ENCODE measurements at regions of chr4 and their contacts with region 1.

Region 1: DNA sequence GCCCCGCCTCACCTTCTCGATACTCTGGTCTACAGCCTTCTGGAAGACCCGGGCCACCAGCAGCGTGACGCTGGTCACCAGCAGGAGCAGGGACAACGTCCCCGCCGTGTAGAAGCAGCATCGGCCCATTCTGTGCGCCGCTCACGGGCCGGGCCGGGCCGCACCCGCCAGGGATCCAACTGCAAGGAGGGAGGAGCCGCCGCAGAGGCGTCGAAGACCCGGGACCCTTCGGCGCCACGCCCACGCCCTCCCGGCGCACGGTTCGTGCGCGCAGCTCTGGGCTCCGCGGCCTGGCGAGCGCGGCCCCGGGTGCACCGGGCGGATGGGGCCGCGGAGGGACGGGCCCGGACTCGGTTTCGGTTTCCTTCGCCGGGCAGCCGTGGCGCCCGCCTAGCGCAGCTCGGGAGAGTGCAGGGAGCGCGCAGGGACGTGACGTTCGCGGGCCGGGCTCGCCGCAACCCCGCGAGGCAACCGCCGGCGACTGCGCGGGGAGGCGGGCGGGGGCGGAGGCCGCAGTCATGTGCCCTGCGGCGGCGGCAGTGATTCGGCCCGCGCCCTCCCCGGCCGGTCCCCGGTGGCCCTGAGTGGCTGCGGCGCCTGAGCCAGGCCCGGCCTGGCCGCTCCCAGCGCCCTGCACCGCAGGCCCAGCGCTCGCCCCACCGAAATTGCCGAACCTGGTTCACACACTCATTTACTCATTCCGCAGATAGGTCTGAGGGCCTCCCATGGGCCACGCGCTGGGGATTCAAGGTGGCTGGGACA is at the start of gene SCARB2:
- DNase-seq: peak; percentile 71 to 95 (median 84)
- H3K4me3 ChIP-seq: peak within 1 kb of the TSS; percentile 59 to 98 (median 89)
- H3K27ac ChIP-seq: peak within 1 kb of the TSS; percentile 95 to 100 (median 99)
- H3K27me3 ChIP-seq: no peaks in the 10 kb centered on the region
- CTCF ChIP-seq: peak in 21 of 56 donors; percentile 4 to 59 (median 24)
- total RNA-seq, gene SCARB2: 107 to 347 (median 169) TPM

Region 2: DNA sequence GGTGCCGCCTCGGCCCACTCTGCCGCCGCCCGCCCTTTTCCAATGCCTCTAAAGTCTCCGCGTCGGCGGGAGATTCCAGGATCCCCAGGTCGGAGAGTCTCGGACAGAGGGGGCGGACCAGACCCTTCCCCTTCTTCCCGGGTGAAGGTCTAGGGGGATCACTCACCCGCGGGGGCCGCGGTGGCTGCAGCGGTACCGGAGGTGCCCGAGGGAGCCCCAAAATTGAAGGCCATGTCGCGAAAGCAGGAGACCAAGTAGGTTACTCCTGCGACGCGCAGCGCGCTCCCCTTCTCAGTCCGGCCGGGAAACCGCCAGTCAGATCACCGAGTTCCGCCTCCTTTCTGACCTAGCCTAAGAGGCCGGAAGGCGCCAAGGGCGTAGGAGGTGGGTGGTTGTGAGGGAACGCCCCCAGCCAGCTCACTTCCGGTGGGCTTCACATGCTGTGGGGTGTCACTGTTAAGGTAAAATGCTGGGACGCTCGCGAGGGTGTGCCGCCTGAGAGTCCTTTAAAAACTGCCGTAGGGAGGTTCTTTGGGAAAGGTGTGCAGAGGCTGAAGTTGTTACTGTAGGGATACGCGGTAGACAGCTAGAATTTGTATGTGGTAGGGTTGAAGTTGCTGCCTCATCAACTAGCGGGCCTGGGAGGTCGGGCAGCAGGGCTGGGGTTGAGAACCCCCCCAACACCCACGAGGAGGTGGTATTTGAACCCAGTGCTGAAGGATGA is 65.3 kb before region 1 on chr4 and contains the start of gene NUP54:
- intact Hi-C with region 1: loop called in 1 of 2 experiments (anchors 2 kb)
- DNase-seq: peak; percentile 89 to 96 (median 94)
- H3K4me3 ChIP-seq: peak within 1 kb of the TSS; percentile 71 to 100 (median 93)
- H3K27ac ChIP-seq: peak within 1 kb of the TSS; percentile 9 to 96 (median 85)
- H3K27me3 ChIP-seq: no peaks in the 10 kb centered on the region
- CTCF ChIP-seq: peak in 31 of 56 donors; percentile 9 to 55 (median 30)
- total RNA-seq, gene NUP54: 26.9 to 65.4 (median 45.4) TPM

Region 3: GRCh38 chr4:76179398-76180318 is 33.9 kb before region 1 on chr4:
- intact Hi-C with region 1: loop called in 1 of 2 experiments (anchors 2 kb)
- DNase-seq: peak; percentile 68 to 95 (median 88)
- H3K4me3 ChIP-seq: peak overlapping the region in 6 of 59 donors; percentile 2 to 26 (median 6)
- H3K27ac ChIP-seq: peak overlapping the region in 58 of 59 donors; percentile 40 to 96 (median 83)
- H3K27me3 ChIP-seq: no peaks in the 10 kb centered on the region
- CTCF ChIP-seq: peak; percentile 73 to 99 (median 95)

Region 4: DNA sequence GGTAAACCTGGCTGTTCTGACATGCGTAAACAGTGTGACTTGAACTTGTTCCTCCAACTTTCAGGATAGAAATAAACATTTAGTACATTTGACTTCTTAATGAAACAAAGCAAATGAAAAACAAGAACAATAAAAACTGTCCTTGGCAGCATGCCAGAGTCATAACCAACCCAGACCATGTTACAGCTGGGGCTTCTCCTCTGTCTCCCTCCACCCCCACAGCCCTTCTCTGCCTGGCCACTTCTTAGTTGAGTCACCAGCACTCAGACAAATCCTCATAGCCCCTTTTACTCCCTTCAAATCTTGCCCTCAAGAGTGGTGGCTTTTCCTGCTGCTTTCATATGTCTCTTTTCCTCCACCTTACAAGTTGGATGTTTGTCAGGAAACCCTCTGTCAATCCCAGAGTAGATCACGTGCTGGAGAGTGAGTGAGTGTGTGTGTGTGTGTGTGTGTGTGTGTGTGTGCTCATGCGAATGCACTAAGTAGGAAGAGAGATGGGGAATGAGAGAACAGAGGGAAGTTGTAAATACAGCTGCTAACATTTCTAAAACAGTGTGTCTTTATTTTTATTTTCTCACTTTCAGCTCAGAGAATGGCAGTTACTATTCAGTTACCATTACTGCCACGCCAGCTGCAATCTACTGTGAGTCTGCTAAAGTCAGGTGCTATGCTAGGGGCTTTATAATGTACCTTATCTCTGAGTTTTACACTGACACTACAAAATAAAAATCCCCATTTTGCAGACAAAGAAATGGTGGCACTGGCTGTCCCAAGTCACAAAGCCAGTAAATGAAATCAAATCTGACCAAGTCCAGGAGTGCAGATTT is 15.0 kb before region 1 on chr4:
- intact Hi-C with region 1: loop called in 1 of 2 experiments (anchors 2 kb)
- DNase-seq: peak in 6 of 10 donors; percentile 30 to 73 (median 39)
- H3K4me3 ChIP-seq: peak overlapping the region in 46 of 59 donors; percentile 1 to 61 (median 26)
- H3K27ac ChIP-seq: peak overlapping the region; percentile 72 to 100 (median 97)
- H3K27me3 ChIP-seq: no peaks in the 10 kb centered on the region
- CTCF ChIP-seq: peak in 1 of 56 donors; percentile 6

Region 5: GRCh38 chr4:76251441-76252270 is 38.1 kb after region 1 on chr4 and contains the start of gene FAM47E:
- intact Hi-C with region 1: loop called in 1 of 2 experiments (anchors 5 kb)
- DNase-seq: peak; percentile 50 to 84 (median 69)
- H3K4me3 ChIP-seq: peak within 1 kb of the TSS; percentile 49 to 93 (median 82)
- H3K27ac ChIP-seq: peak within 1 kb of the TSS in 48 of 59 donors; percentile 1 to 86 (median 56)
- H3K27me3 ChIP-seq: no peaks in the 10 kb centered on the region
- CTCF ChIP-seq: peak in 48 of 56 donors; percentile 11 to 67 (median 47)
- total RNA-seq, gene FAM47E: 7.2 to 35.1 (median 21.0) TPM

Region 6: DNA sequence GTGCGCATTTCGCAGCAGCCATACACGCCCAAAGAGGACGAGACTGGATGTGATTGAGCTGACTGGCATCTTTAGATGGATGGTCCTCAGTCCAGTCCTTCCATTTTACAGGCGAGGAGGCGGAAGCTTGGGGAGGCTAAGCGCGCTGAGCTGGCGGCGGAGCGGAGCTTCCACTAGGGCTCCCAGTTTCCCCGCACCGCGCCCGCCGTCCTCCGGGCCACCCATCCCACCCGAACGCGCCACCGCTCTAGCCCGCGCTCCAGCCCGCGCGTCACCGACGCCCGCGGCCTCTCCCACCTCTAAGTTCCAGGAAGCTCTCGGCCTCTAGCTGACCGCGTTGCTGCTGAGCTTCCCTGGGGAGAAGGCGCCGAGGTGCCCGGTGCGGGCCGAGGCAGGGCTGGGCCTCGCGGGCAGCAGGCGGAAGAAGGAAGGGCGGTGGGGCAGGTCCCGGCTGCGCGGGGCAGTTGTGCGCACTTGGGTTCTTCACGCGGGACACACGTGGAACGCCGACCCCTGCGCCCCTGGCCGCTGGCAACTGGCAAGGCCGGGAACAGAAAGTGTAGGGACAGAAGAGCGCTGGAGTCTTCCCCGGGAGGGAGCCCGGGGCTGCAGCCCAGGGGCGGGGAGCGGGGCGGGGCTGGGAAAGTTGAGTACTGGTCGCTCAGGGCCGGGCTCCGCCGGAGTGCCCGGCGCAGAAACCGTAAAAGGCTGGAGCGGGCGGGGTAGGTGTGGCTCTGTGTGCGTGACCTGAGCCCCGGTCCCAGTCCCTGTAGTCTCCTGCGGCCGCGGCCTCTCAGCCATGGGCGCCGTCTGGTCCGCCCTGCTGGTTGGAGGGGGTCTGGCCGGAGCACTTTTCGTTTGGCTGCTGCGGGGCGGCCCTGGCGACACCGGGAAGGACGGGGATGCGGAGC is 92.6 kb after region 1 on chr4 and contains the start of gene STBD1:
- intact Hi-C with region 1: loop called in 1 of 2 experiments (anchors 10 kb)
- DNase-seq: peak in 7 of 10 donors; percentile 8 to 67 (median 48)
- H3K4me3 ChIP-seq: peak within 1 kb of the TSS; percentile 56 to 92 (median 80)
- H3K27ac ChIP-seq: peak within 1 kb of the TSS in 49 of 59 donors; percentile 5 to 86 (median 54)
- H3K27me3 ChIP-seq: no peaks in the 10 kb centered on the region
- CTCF ChIP-seq: peak in 4 of 56 donors; percentile 2 to 13 (median 9)
- total RNA-seq, gene STBD1: 1.1 to 7.0 (median 3.3) TPM

Region 7: GRCh38 chr4:76535603-76536367 is 322.2 kb after region 1 on chr4:
- intact Hi-C with region 1: no loop called
- DNase-seq: no peak
- H3K4me3 ChIP-seq: no peak overlapping the region
- H3K27ac ChIP-seq: no peak overlapping the region
- H3K27me3 ChIP-seq: no peaks in the 10 kb centered on the region
- CTCF ChIP-seq: no peak